WTC11 (cell line): ENCODE measurements at regions of chr13 and their contacts with region 1.

Region 1: GRCh38 chr13:103839460-103839859 is 773.2 kb upstream of the SLC10A2 start:
- DNase-seq: no peak
- ATAC-seq: no peak
- H3K4me3 Mint-ChIP-seq: no peak overlapping the region
- H3K27ac Mint-ChIP-seq: no peak overlapping the region
- H3K4me1 Mint-ChIP-seq: peaks cover 2% of the 10 kb centered on the region; the same call in 1 of the 2 replicates
- H3K27me3 Mint-ChIP-seq: no peaks in the 10 kb centered on the region
- CTCF ChIP-seq: no peak

Region 2: GRCh38 chr13:102724923-102725322 is 1114.5 kb before region 1 on chr13:
- CTCF ChIA-PET with region 1: no interaction called
- POLR2A ChIA-PET with region 1: interaction called, 10 read pairs
- DNase-seq: no peak
- ATAC-seq: no peak
- H3K4me3 Mint-ChIP-seq: no peak overlapping the region
- H3K27ac Mint-ChIP-seq: no peak overlapping the region
- H3K4me1 Mint-ChIP-seq: no peaks in the 10 kb centered on the region
- H3K27me3 Mint-ChIP-seq: no peaks in the 10 kb centered on the region
- CTCF ChIP-seq: no peak

Region 3: DNA sequence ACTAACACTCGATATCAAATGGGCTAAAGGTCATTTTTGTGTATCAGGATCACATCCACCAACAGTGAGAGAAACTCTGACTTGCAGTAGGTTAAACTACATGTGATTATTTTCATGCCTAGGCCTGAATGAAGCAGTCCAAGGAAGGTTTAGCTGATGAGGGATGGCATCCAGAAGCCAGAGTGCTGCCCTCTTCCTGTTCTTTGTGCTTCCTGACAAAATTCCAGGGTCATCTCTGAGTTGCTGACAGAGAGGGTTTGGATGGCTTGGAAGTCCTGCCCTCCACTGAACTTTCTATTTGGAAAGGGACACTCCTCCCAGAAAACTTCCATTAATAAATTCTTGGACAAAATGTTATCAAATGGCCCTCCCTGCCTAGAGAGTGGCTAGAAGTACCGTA is 44.9 kb before region 1 on chr13:
- CTCF ChIA-PET with region 1: no interaction called
- POLR2A ChIA-PET with region 1: no interaction called
- DNase-seq: no peak
- ATAC-seq: peak; percentile 68
- H3K4me3 Mint-ChIP-seq: no peak overlapping the region
- H3K27ac Mint-ChIP-seq: no peak overlapping the region
- H3K4me1 Mint-ChIP-seq: no peaks in the 10 kb centered on the region
- H3K27me3 Mint-ChIP-seq: no peaks in the 10 kb centered on the region
- CTCF ChIP-seq: no peak